HepG2 (cell line): ENCODE measurements at regions of chr20 and their contacts with region 1.

Region 1: GRCh38 chr20:3866466-3866916 is 19.9 kb downstream of the MAVS start:
- DNase-seq: no peak
- ATAC-seq: peak; percentile 8
- H3K4me3 ChIP-seq: no peak overlapping the region
- H3K27ac ChIP-seq: no peak overlapping the region
- H3K4me1 ChIP-seq: peaks cover 4% of the 10 kb centered on the region
- H3K27me3 ChIP-seq: no peaks in the 10 kb centered on the region
- CTCF ChIP-seq: no peak
- EP300 ChIP-seq: no peak
- POLR2A ChIP-seq: peak in 1 of 2 experiments; percentile 35; a peak in 2 of 4 replicates
- RAD21 ChIP-seq: no peak

Region 2: GRCh38 chr20:3696200-3696599 is 170.3 kb before region 1 on chr20:
- CTCF ChIA-PET with region 1: no interaction called
- POLR2A ChIA-PET with region 1: no interaction called
- in situ Hi-C with region 1: no loop called
- intact Hi-C with region 1: no loop called
- DNase-seq: no peak
- ATAC-seq: no peak
- H3K4me3 ChIP-seq: no peak overlapping the region
- H3K27ac ChIP-seq: no peak overlapping the region
- H3K4me1 ChIP-seq: peaks cover 12% of the 10 kb centered on the region
- H3K27me3 ChIP-seq: peaks cover 24 to 67% of the 10 kb centered on the region in 2 experiments; a peak in 3 of 5 replicates
- CTCF ChIP-seq: peak; percentile 49
- EP300 ChIP-seq: no peak
- POLR2A ChIP-seq: no peak
- RAD21 ChIP-seq: 0 out of 2 replicates have a peak, but pooled peaks have one; percentile 14

Region 3: GRCh38 chr20:3760655-3761348 is 105.7 kb before region 1 on chr20:
- CTCF ChIA-PET with region 1: no interaction called
- POLR2A ChIA-PET with region 1: no interaction called
- in situ Hi-C with region 1: no loop called
- intact Hi-C with region 1: no loop called
- DNase-seq: no peak
- ATAC-seq: no peak
- H3K4me3 ChIP-seq: no peak overlapping the region
- H3K27ac ChIP-seq: no peak overlapping the region
- H3K4me1 ChIP-seq: peaks cover 25% of the 10 kb centered on the region
- H3K27me3 ChIP-seq: no peaks in the 10 kb centered on the region
- CTCF ChIP-seq: no peak
- EP300 ChIP-seq: no peak
- POLR2A ChIP-seq: no peak
- RAD21 ChIP-seq: no peak

Region 4: GRCh38 chr20:3854462-3854871 is 12.0 kb before region 1 on chr20:
- CTCF ChIA-PET with region 1: no interaction called
- POLR2A ChIA-PET with region 1: interaction called, 11 read pairs
- in situ Hi-C with region 1: no loop called
- intact Hi-C with region 1: no loop called
- DNase-seq: peak; percentile 70
- ATAC-seq: peak; percentile 65
- H3K4me3 ChIP-seq: no peak overlapping the region
- H3K27ac ChIP-seq: peak overlapping the region; percentile 22
- H3K4me1 ChIP-seq: peaks cover 24% of the 10 kb centered on the region
- H3K27me3 ChIP-seq: no peaks in the 10 kb centered on the region
- CTCF ChIP-seq: no peak
- EP300 ChIP-seq: peak in 1 of 2 experiments; percentile 31; a peak in 1 of 4 replicates
- POLR2A ChIP-seq: no peak
- RAD21 ChIP-seq: no peak